Breast epithelium (tissue), 4 donors: ENCODE measurements at regions of chr5 and their contacts with region 1.

Region 1: DNA sequence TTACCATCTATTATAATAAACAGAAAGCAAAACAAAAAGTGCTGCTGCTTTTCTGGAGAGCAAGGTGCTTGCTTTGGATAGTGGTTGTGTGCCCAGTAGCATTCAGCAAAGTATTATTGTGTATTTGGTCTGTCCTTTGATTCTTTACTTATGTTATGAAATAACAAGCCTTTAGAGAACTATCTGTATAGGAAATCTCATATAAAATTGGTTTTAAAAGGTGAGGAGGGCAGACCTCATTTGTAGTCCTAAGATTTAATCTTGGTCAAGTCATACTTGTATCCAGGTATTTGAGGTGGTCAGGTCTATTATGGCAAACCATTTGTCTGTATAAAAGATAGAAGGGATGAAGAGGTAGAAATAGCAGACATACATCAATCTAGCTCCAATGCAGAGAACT is 53.3 kb downstream of the BDP1 start:
- DNase-seq: no peak
- H3K4me3 ChIP-seq: no peak overlapping the region
- H3K27ac ChIP-seq: no peak overlapping the region
- H3K4me1 ChIP-seq: no peaks in the 10 kb centered on the region
- H3K27me3 ChIP-seq: no peaks in the 10 kb centered on the region
- CTCF ChIP-seq: no peak
- POLR2A ChIP-seq: no peak

Region 2: DNA sequence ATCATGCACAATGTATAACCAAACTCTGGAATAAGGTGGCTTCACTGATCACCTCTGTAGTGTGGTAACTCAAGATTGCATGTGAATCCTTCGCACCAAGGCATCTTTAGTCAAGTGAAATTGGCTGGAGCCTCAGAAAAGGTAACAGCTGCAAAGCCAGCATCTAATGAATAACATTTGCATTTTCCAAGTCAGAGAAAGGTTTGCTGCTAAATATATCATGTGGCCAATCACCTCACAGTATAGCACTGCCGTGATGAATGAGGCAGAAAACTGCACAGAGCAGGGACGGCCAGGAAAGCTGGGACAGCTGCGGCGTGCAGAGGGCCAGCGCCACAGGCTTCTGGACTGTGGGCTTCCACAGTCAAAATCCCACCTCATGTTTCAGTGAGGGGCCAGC is 792.8 kb after region 1 on chr5:
- intact Hi-C with region 1: loop called (anchors 5 kb)
- DNase-seq: no peak
- H3K4me3 ChIP-seq: no peak overlapping the region
- H3K27ac ChIP-seq: no peak overlapping the region
- H3K4me1 ChIP-seq: no peaks in the 10 kb centered on the region
- H3K27me3 ChIP-seq: no peaks in the 10 kb centered on the region
- CTCF ChIP-seq: no peak
- POLR2A ChIP-seq: no peak